CD4-positive, alpha-beta memory T cell (primary cell): ENCODE measurements at regions of chr1 and their contacts with region 1.

Region 1: GRCh38 chr1:151346769-151347522 is at the start of gene RFX5:
- DNase-seq: peak; percentile 93 to 98 (median 97)
- H3K4me3 ChIP-seq: peak within 1 kb of the TSS; percentile 59 to 71
- H3K4me3 Mint-ChIP-seq: peak within 1 kb of the TSS; percentile 90 to 98 (median 94)
- H3K27ac ChIP-seq: peak within 1 kb of the TSS; percentile 97
- H3K27ac Mint-ChIP-seq: peak within 1 kb of the TSS; percentile 96 to 100 (median 98)
- H3K4me1 ChIP-seq: peaks cover 28% of the 10 kb centered on the region
- H3K4me1 Mint-ChIP-seq: peaks cover 22 to 41% (median 31%) of the 10 kb centered on the region in 4 donors
- H3K27me3 ChIP-seq: no peaks in the 10 kb centered on the region
- H3K27me3 Mint-ChIP-seq: no peaks in the 10 kb centered on the region
- total RNA-seq, gene RFX5: 56.3 to 64.3 TPM

Region 2: GRCh38 chr1:151070474-151071276 is 276.3 kb before region 1 on chr1 and contains the start of gene GABPB2:
- CTCF ChIA-PET with region 1: no interaction called
- POLR2A ChIA-PET with region 1: no interaction called
- intact Hi-C with region 1: loop called (anchors 10 kb)
- DNase-seq: peak; percentile 87 to 96 (median 88)
- H3K4me3 ChIP-seq: peak within 1 kb of the TSS; percentile 57 to 96
- H3K4me3 Mint-ChIP-seq: peak within 1 kb of the TSS; percentile 95 to 100 (median 99)
- H3K27ac ChIP-seq: peak within 1 kb of the TSS; percentile 97
- H3K27ac Mint-ChIP-seq: peak within 1 kb of the TSS; percentile 97 to 100 (median 100)
- H3K4me1 ChIP-seq: peaks cover 17% of the 10 kb centered on the region
- H3K4me1 Mint-ChIP-seq: peaks cover 13 to 34% (median 23%) of the 10 kb centered on the region in 4 donors
- H3K27me3 ChIP-seq: no peaks in the 10 kb centered on the region
- H3K27me3 Mint-ChIP-seq: no peaks in the 10 kb centered on the region
- total RNA-seq, gene GABPB2: 36.8 to 42.8 TPM

Region 3: GRCh38 chr1:151198255-151199127 is 148.5 kb before region 1 on chr1 and contains the start of gene PIP5K1A:
- CTCF ChIA-PET with region 1: no interaction called
- POLR2A ChIA-PET with region 1: no interaction called
- intact Hi-C with region 1: loop called (anchors 2 kb)
- DNase-seq: peak; percentile 96 to 99 (median 98)
- H3K4me3 ChIP-seq: peak within 1 kb of the TSS; percentile 89 to 99
- H3K4me3 Mint-ChIP-seq: peak within 1 kb of the TSS; percentile 96 to 100 (median 98)
- H3K27ac ChIP-seq: peak within 1 kb of the TSS; percentile 79
- H3K27ac Mint-ChIP-seq: peak within 1 kb of the TSS; percentile 93 to 100 (median 97)
- H3K4me1 ChIP-seq: peaks cover 34% of the 10 kb centered on the region
- H3K4me1 Mint-ChIP-seq: peaks cover 29 to 53% (median 41%) of the 10 kb centered on the region in 4 donors
- H3K27me3 ChIP-seq: no peaks in the 10 kb centered on the region
- H3K27me3 Mint-ChIP-seq: peaks cover 0 to 2% of the 10 kb centered on the region in 2 donors
- total RNA-seq, gene PIP5K1A: 50.8 to 53.1 TPM

Region 4: DNA sequence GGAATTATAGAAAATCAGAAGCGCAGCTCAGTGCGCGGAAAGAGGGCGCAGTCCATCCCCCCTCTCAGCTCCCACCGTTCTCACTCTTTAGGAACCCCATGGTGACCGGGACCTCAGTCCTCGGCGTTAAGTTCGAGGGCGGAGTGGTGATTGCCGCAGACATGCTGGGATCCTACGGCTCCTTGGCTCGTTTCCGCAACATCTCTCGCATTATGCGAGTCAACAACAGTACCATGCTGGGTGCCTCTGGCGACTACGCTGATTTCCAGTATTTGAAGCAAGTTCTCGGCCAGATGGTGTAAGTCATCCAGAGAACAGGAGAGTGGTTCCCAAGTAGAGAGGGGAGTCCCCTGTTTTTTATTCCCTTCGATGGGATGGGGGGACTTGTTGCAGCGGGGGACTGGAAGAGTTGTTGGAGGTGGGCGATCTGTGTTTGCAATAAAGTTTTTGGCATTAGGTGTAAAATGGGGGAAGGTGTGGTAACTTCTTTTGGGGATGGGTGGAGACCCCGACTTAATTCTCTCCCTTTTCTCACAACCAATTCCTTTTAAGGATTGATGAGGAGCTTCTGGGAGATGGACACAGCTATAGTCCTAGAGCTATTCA is 53.0 kb after region 1 on chr1:
- CTCF ChIA-PET with region 1: no interaction called
- POLR2A ChIA-PET with region 1: interaction called, 14 read pairs
- intact Hi-C with region 1: loop called (anchors 1 kb)
- DNase-seq: peak in 2 of 5 donors; percentile 22 to 41
- H3K4me3 ChIP-seq: peak overlapping the region; percentile 80 to 85
- H3K4me3 Mint-ChIP-seq: peak overlapping the region; percentile 90 to 99 (median 95)
- H3K27ac ChIP-seq: peak overlapping the region; percentile 97
- H3K27ac Mint-ChIP-seq: peak overlapping the region; percentile 86 to 100 (median 99)
- H3K4me1 ChIP-seq: peaks cover 23% of the 10 kb centered on the region
- H3K4me1 Mint-ChIP-seq: peaks cover 14 to 31% (median 18%) of the 10 kb centered on the region in 4 donors
- H3K27me3 ChIP-seq: no peaks in the 10 kb centered on the region
- H3K27me3 Mint-ChIP-seq: no peaks in the 10 kb centered on the region